ENCODE measurements at regions of chr1 and their contacts with region 1.

Region 1: DNA sequence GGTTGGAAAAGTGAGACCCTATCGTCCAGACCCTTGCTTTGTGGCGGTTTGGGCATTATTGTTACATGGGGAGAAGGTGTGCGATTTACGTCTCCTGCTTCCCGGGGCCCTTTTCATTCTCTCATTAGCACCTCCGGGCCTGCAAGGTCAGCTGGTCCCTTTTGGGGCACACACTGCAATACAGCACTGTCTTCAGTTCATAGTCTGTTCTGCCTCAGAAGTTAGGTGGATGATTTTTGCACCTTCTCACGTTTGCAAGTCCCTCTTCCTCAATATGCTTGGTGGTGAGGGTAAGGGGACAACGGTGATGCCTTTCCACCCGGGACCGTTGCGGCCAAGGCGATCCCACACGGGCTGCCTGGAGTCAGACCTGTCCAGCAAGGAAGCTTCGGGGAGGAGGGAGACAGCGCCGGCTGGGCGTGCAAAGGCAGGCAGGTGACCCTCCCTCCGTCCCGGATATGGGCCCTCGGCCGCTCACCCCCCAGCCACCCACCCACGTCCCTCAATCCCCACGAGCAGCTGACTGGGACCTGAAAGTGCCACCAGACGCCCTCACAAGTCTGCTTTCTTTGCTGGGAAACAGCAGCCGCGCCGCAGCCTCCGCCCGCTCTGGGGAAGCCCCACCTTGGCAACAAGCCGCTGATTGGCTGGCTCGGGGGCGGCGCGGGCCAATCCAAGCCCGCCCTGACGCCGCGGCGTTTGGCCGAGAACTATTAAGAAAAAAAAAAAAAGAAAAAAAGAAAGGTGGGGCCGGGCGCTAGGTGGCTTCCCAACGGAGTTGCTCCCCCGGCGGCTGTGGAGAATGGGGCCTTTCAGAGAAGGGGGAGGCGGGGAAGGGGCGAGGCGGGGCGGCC is 21.7 kb downstream of the BTG2 start:
- DNase-seq: peak; percentile 96
- H3K4me3 Mint-ChIP-seq: peak overlapping the region; percentile 74
- H3K27ac Mint-ChIP-seq: peak overlapping the region; percentile 94
- H3K4me1 Mint-ChIP-seq: peaks cover 66% of the 10 kb centered on the region
- H3K27me3 Mint-ChIP-seq: peaks cover 5% of the 10 kb centered on the region

Region 2: GRCh38 chr1:203290261-203291089 is 36.6 kb before region 1 on chr1:
- CTCF ChIA-PET with region 1: interaction called, 63 read pairs
- DNase-seq: peak; percentile 99
- H3K4me3 Mint-ChIP-seq: peak overlapping the region; percentile 76
- H3K27ac Mint-ChIP-seq: peak overlapping the region; percentile 100
- H3K4me1 Mint-ChIP-seq: peaks cover 80% of the 10 kb centered on the region
- H3K27me3 Mint-ChIP-seq: no peaks in the 10 kb centered on the region

Region 3: GRCh38 chr1:203304919-203305808 is 21.9 kb before region 1 on chr1 and contains the start of gene BTG2:
- CTCF ChIA-PET with region 1: interaction called, 138 read pairs
- DNase-seq: peak; percentile 94
- H3K4me3 Mint-ChIP-seq: peak within 1 kb of the TSS; percentile 86
- H3K27ac Mint-ChIP-seq: peak within 1 kb of the TSS; percentile 90
- H3K4me1 Mint-ChIP-seq: peaks cover 61% of the 10 kb centered on the region
- H3K27me3 Mint-ChIP-seq: no peaks in the 10 kb centered on the region

Measured in activated naive CD4-positive, alpha-beta T cell treated with anti-CD3 and anti-CD28 coated beads, Interleukin-2, amount 10 ng/mL, durations not matched to agents 7 days and 5 days (primary cell).